ENCODE measurements at regions of chr22 and their contacts with region 1.

Region 1: DNA sequence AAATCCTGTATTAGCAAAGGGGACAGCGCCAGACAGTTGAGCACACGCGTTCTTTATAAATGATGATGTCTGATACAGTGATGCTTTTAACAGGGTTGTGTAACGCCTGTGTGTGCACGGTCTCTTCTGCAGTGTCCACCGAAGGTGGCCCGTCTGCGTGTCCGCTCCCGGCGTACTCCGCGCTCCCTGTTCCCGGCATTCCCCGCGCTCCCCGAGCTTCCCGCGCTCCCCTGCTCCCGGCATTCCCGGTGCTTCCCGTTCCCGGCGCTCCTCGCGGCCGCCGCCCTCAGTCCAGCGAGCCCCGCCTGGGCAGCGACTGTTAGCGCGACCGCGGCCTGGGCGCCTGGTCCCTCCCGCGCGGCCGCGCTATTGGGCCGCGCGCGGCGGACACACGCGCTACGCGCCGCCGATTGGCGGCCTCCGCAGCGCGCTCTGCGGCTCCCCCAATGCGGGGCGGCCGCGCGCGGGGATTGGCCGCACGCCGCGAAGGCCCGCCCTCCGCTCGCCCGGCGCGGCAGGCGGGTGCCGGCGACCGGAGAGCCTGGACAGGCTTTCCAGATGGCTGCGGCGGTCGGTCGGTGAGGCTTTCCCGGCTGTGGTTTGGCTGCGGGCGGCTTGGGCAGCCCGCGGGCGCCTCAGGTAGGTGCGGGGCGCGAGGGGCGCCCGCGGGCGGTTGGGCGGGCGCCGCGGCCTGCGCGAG is at the start of gene DGCR8:
- DNase-seq: peak; percentile 90 to 94
- ATAC-seq: peak; percentile 84 to 86
- H3K4me3 ChIP-seq: peak within 1 kb of the TSS; percentile 61 to 87 (median 75)
- H3K27ac ChIP-seq: peak within 1 kb of the TSS; percentile 83 to 96 (median 86)
- H3K4me1 ChIP-seq: peaks cover 43 to 50% of the 10 kb centered on the region in 2 donors
- H3K27me3 ChIP-seq: no peaks in the 10 kb centered on the region
- CTCF ChIP-seq: peak in 1 of 5 experiments; percentile 6
- POLR2A ChIP-seq: peak; percentile 62 to 65
- total RNA-seq, gene DGCR8: 5.2 to 16.5 (median 11.2) TPM

Region 2: GRCh38 chr22:19679522-19680101 is 400.3 kb before region 1 on chr22:
- in situ Hi-C with region 1: no loop called
- intact Hi-C with region 1: no loop called
- DNase-seq: peak in 1 of 2 donors; percentile 25
- ATAC-seq: peak; percentile 56 to 75
- H3K4me3 ChIP-seq: no peak overlapping the region
- H3K27ac ChIP-seq: no peak overlapping the region
- H3K4me1 ChIP-seq: no peaks in the 10 kb centered on the region
- H3K27me3 ChIP-seq: peaks cover 0 to 9% (median 0%) of the 10 kb centered on the region in 3 donors
- CTCF ChIP-seq: peak; percentile 74 to 94 (median 92)
- POLR2A ChIP-seq: no peak

Region 3: GRCh38 chr22:19970479-19971275 is 109.2 kb before region 1 on chr22:
- in situ Hi-C with region 1: no loop called
- intact Hi-C with region 1: loop called (anchors 10 kb)
- DNase-seq: peak; percentile 35 to 55
- ATAC-seq: peak; percentile 73 to 75
- H3K4me3 ChIP-seq: no peak overlapping the region
- H3K27ac ChIP-seq: peak overlapping the region in 3 of 4 donors; percentile 8 to 64 (median 64)
- H3K4me1 ChIP-seq: peaks cover 0 to 8% of the 10 kb centered on the region in 2 donors
- H3K27me3 ChIP-seq: no peaks in the 10 kb centered on the region
- CTCF ChIP-seq: peak; percentile 85 to 99 (median 94)
- POLR2A ChIP-seq: no peak

Region 4: DNA sequence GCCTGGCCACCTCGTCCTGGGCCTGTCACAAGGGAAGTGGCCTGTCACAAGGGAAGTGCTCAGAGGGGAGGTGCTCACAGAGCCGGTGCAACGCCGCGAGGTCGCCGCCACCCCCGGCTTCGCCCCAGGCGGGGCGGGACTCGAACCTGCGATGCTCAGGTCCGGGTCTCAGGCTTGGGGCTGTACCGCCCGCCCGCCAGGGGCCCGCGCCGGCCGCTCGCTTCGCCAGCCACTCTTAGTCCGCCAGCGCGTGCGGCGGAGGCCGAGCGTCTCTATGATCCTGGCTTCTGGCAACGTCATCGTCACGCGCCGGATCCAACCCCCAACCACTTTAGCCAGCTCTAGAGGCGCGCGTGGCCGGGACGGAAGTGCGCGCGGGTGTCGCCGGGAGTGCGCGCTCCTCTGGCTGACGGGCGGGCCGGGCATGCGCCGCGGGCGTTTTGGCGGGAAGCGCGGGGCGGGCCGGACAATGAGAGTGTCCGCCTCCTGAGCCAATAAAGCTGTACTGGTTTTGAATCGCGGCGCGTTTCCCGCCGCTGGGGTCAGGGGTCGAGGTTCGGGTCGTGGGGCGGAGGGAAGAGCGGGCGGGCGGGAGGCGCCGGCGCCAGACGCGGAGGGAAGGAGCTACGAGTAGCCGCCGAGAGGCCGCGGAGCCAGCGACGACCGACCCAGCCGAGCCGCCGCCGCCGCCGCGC is 37.2 kb after region 1 on chr22 and contains the start of gene TRMT2A:
- in situ Hi-C with region 1: no loop called
- intact Hi-C with region 1: loop called (anchors 1 kb)
- DNase-seq: peak; percentile 94 to 98
- ATAC-seq: peak; percentile 90 to 93
- H3K4me3 ChIP-seq: peak within 1 kb of the TSS; percentile 79 to 97 (median 86)
- H3K27ac ChIP-seq: peak within 1 kb of the TSS; percentile 94 to 99 (median 96)
- H3K4me1 ChIP-seq: peaks cover 28 to 34% of the 10 kb centered on the region in 2 donors
- H3K27me3 ChIP-seq: no peaks in the 10 kb centered on the region
- CTCF ChIP-seq: peak in 2 of 5 experiments; percentile 9 to 10
- POLR2A ChIP-seq: peak; percentile 76 to 79
- total RNA-seq, gene TRMT2A: 16.9 to 38.0 (median 28.2) TPM

Measured in gastrocnemius medialis (tissue), 4 donors.